Naive thymus-derived CD4-positive, alpha-beta T cell (primary cell): ENCODE measurements at regions of chrX and their contacts with region 1.

Region 1: GRCh38 chrX:49043220-49043986 is at the start of gene TFE3:
- DNase-seq: peak; percentile 77 to 96 (median 91)
- ATAC-seq: peak; percentile 93
- H3K4me3 ChIP-seq: peak within 1 kb of the TSS; percentile 54
- H3K4me3 Mint-ChIP-seq: peak within 1 kb of the TSS; percentile 78 to 95 (median 89)
- H3K27ac ChIP-seq: peak within 1 kb of the TSS; percentile 96
- H3K27ac Mint-ChIP-seq: peak within 1 kb of the TSS; percentile 80 to 96 (median 96)
- H3K4me1 ChIP-seq: peaks cover 5 to 21% of the 10 kb centered on the region in 2 donors
- H3K4me1 Mint-ChIP-seq: peaks cover 18 to 40% (median 31%) of the 10 kb centered on the region in 7 donors
- H3K27me3 ChIP-seq: no peaks in the 10 kb centered on the region
- H3K27me3 Mint-ChIP-seq: no peaks in the 10 kb centered on the region
- total RNA-seq, gene TFE3: 26.2 to 54.2 (median 30.5) TPM

Region 2: DNA sequence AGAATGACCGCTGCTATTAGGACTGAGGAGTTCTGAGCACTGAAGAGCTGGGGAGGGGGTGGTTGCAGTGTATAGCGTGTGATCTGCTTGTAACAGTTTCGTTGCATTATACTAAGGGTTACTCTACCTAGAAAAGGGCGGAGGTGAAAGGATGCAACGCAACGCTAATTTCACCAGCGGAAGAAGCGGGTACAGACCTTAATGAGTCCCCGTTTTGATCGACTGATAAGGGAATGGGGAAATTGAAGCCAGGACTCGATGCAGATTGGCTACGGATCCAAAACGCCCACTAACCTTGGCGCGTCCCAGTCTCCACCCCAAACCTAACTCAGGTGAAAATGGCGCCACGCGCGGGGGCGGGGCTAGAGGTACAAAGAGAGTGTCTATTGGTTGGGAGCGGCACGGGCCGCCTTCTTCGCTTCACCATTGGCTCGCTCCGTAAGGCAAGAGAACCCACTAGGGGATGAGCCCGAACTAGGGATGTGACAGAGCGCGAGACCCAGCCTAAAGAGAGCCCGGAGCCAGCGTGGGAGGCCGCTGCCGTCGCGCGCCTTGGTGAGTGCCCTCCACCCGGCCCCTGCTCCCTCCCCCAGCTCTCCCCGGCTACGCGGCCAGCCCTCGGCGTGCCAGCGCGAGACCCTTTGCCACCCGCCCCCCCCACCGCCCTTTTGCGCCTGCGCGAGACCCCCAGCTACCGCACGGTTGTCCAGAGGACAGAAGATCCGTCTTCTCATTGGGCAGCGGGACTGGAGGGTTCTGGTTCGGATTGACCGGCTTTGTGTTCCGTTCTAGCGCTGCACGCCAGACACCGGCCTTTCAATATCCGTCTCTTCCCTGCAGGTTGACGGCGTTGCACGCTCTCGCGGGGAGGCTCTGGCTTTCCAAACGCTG is 521.8 kb before region 1 on chrX and contains the start of gene EBP:
- CTCF ChIA-PET with region 1: no interaction called
- POLR2A ChIA-PET with region 1: no interaction called
- intact Hi-C with region 1: loop called in 1 of 2 experiments (anchors 2 kb)
- DNase-seq: peak; percentile 82 to 96 (median 94)
- ATAC-seq: peak; percentile 98
- H3K4me3 ChIP-seq: peak within 1 kb of the TSS; percentile 78
- H3K4me3 Mint-ChIP-seq: peak within 1 kb of the TSS; percentile 73 to 93 (median 89)
- H3K27ac ChIP-seq: peak within 1 kb of the TSS; percentile 82
- H3K27ac Mint-ChIP-seq: peak within 1 kb of the TSS; percentile 90 to 99 (median 94)
- H3K4me1 ChIP-seq: peaks cover 12 to 19% of the 10 kb centered on the region in 2 donors
- H3K4me1 Mint-ChIP-seq: peaks cover 14 to 39% (median 34%) of the 10 kb centered on the region in 7 donors
- H3K27me3 ChIP-seq: no peaks in the 10 kb centered on the region
- H3K27me3 Mint-ChIP-seq: no peaks in the 10 kb centered on the region
- total RNA-seq, gene EBP: 33.3 to 188 (median 35.3) TPM

Region 3: GRCh38 chrX:48648336-48648751 is 395.1 kb before region 1 on chrX:
- CTCF ChIA-PET with region 1: no interaction called
- POLR2A ChIA-PET with region 1: no interaction called
- intact Hi-C with region 1: loop called in 1 of 2 experiments (anchors 2 kb)
- DNase-seq: peak in 8 of 9 donors; percentile 17 to 54 (median 38)
- ATAC-seq: peak; percentile 70
- H3K4me3 ChIP-seq: no peak overlapping the region
- H3K4me3 Mint-ChIP-seq: no peak overlapping the region
- H3K27ac ChIP-seq: no peak overlapping the region
- H3K27ac Mint-ChIP-seq: peak overlapping the region in 3 of 9 donors; percentile 42 to 58 (median 53)
- H3K4me1 ChIP-seq: no peaks in the 10 kb centered on the region
- H3K4me1 Mint-ChIP-seq: peaks cover 0 to 18% (median 13%) of the 10 kb centered on the region in 7 donors
- H3K27me3 ChIP-seq: no peaks in the 10 kb centered on the region
- H3K27me3 Mint-ChIP-seq: no peaks in the 10 kb centered on the region

Region 4: GRCh38 chrX:48897621-48898306 is 145.6 kb before region 1 on chrX and contains the starts of genes PQBP1 and TIMM17B:
- CTCF ChIA-PET with region 1: no interaction called
- POLR2A ChIA-PET with region 1: no interaction called
- intact Hi-C with region 1: loop called in 1 of 2 experiments (anchors 1 kb)
- DNase-seq: peak; percentile 71 to 93 (median 89)
- ATAC-seq: peak; percentile 92
- H3K4me3 ChIP-seq: peak within 1 kb of the TSS; percentile 91
- H3K4me3 Mint-ChIP-seq: peak within 1 kb of the TSS; percentile 83 to 100 (median 91)
- H3K27ac ChIP-seq: peak within 1 kb of the TSS; percentile 98
- H3K27ac Mint-ChIP-seq: peak within 1 kb of the TSS; percentile 89 to 98 (median 94)
- H3K4me1 ChIP-seq: peaks cover 12 to 16% of the 10 kb centered on the region in 2 donors
- H3K4me1 Mint-ChIP-seq: peaks cover 6 to 42% (median 24%) of the 10 kb centered on the region in 7 donors
- H3K27me3 ChIP-seq: no peaks in the 10 kb centered on the region
- H3K27me3 Mint-ChIP-seq: no peaks in the 10 kb centered on the region
- total RNA-seq, gene PQBP1: 64.1 to 89.5 (median 74.6) TPM
- total RNA-seq, gene TIMM17B: 41.1 to 46.6 (median 44.2) TPM

Region 5: DNA sequence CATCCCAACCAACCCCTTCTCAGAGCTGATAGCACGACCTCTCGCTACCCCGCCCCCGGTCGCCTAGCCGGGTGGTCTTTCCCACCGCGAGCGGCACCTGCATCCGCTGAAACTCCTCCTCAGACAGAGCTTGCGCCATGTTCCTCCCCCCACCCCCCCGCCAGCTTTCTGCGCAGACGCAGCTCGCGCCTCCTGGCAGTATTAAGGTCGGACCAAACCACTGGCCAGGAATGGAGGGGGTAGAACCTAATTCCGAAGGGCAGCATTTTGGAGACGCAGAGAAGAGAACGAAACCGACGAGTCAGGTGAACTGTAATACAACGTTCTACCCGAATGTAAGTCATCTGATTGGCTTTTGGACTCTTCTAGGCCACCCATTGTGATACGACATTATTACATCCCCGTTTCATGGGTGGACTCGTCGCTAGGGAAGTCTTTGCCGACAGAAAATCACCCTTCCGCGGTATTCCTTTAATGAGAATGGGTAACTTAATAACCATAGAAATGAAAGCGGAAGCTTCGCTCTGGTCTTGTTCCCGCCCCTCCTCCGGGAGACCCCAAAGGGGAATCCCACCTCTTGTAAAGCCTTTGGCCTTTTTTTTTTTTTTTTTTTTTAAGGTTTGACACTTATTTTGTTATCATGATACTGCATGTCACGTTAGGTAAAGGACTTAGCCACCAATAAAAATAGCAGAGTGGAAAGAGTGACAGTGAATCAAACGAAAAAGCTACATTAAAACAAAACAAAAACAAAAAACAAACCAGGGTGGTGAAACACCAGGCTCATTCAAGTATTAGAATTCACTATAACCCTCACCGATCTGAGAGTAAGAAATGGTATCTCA is 41.1 kb before region 1 on chrX and contains the start of gene GRIPAP1:
- CTCF ChIA-PET with region 1: no interaction called
- POLR2A ChIA-PET with region 1: interaction called, 14 read pairs
- intact Hi-C with region 1: loop called (anchors 1 kb)
- DNase-seq: peak; percentile 61 to 87 (median 79)
- ATAC-seq: peak; percentile 88
- H3K4me3 ChIP-seq: peak within 1 kb of the TSS; percentile 97
- H3K4me3 Mint-ChIP-seq: peak within 1 kb of the TSS; percentile 94 to 99 (median 98)
- H3K27ac ChIP-seq: peak within 1 kb of the TSS; percentile 97
- H3K27ac Mint-ChIP-seq: peak within 1 kb of the TSS; percentile 92 to 100 (median 98)
- H3K4me1 ChIP-seq: peaks cover 9 to 10% of the 10 kb centered on the region in 2 donors
- H3K4me1 Mint-ChIP-seq: peaks cover 7 to 43% (median 32%) of the 10 kb centered on the region in 7 donors
- H3K27me3 ChIP-seq: no peaks in the 10 kb centered on the region
- H3K27me3 Mint-ChIP-seq: no peaks in the 10 kb centered on the region
- total RNA-seq, gene GRIPAP1: 103 to 108 (median 105) TPM

Region 6: GRCh38 chrX:49100704-49101628 is 57.6 kb after region 1 on chrX:
- CTCF ChIA-PET with region 1: no interaction called
- POLR2A ChIA-PET with region 1: no interaction called
- intact Hi-C with region 1: loop called (anchors 1 to 5 kb)
- DNase-seq: peak; percentile 75 to 90 (median 87)
- ATAC-seq: peak; percentile 97
- H3K4me3 ChIP-seq: peak overlapping the region; percentile 82
- H3K4me3 Mint-ChIP-seq: peak overlapping the region; percentile 80 to 93 (median 90)
- H3K27ac ChIP-seq: peak overlapping the region; percentile 78
- H3K27ac Mint-ChIP-seq: peak overlapping the region; percentile 74 to 95 (median 91)
- H3K4me1 ChIP-seq: no peaks in the 10 kb centered on the region
- H3K4me1 Mint-ChIP-seq: peaks cover 0 to 8% (median 0%) of the 10 kb centered on the region in 7 donors
- H3K27me3 ChIP-seq: no peaks in the 10 kb centered on the region
- H3K27me3 Mint-ChIP-seq: no peaks in the 10 kb centered on the region

Region 7: GRCh38 chrX:49137492-49137891 is 94.1 kb after region 1 on chrX:
- CTCF ChIA-PET with region 1: no interaction called
- POLR2A ChIA-PET with region 1: no interaction called
- intact Hi-C with region 1: no loop called
- DNase-seq: no peak
- ATAC-seq: no peak
- H3K4me3 ChIP-seq: no peak overlapping the region
- H3K4me3 Mint-ChIP-seq: no peak overlapping the region
- H3K27ac ChIP-seq: no peak overlapping the region
- H3K27ac Mint-ChIP-seq: no peak overlapping the region
- H3K4me1 ChIP-seq: no peaks in the 10 kb centered on the region
- H3K4me1 Mint-ChIP-seq: peaks cover 0 to 2% (median 0%) of the 10 kb centered on the region in 7 donors
- H3K27me3 ChIP-seq: no peaks in the 10 kb centered on the region
- H3K27me3 Mint-ChIP-seq: no peaks in the 10 kb centered on the region

Region 8: DNA sequence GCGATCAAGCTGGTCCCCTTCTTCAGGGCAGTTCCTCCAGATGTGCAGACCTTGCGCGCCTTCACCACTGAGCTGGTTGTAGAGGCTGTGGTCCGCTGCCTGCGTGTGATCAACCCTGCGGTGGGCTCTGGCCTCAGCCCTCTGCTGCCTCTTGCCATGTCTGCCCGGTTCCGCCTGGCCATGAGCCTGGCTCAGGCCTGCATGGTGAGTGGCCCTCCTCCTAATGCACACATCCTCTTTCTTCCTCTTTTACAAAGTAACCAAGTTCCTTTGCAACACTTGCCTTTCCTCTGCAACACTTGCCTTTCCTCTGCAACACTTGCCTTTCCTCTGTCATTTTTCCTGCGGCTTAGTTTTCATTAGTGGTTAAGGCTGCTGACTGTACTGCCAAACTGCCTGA is 193.7 kb after region 1 on chrX:
- CTCF ChIA-PET with region 1: no interaction called
- POLR2A ChIA-PET with region 1: no interaction called
- intact Hi-C with region 1: no loop called
- DNase-seq: no peak
- ATAC-seq: peak; percentile 57
- H3K4me3 ChIP-seq: peak overlapping the region; percentile 9
- H3K4me3 Mint-ChIP-seq: peak overlapping the region; percentile 75 to 97 (median 90)
- H3K27ac ChIP-seq: peak overlapping the region; percentile 7
- H3K27ac Mint-ChIP-seq: peak overlapping the region; percentile 42 to 90 (median 68)
- H3K4me1 ChIP-seq: peaks cover 9 to 12% of the 10 kb centered on the region in 2 donors
- H3K4me1 Mint-ChIP-seq: peaks cover 9 to 40% (median 32%) of the 10 kb centered on the region in 7 donors
- H3K27me3 ChIP-seq: no peaks in the 10 kb centered on the region
- H3K27me3 Mint-ChIP-seq: no peaks in the 10 kb centered on the region